GM10248 (cell line): ENCODE measurements at regions of chr2 and their contacts with region 1.

Region 1: GRCh38 chr2:86468162-86469033 is 27.2 kb downstream of the KDM3A start:
- DNase-seq: no peak
- CTCF ChIP-seq: no peak

Region 2: DNA sequence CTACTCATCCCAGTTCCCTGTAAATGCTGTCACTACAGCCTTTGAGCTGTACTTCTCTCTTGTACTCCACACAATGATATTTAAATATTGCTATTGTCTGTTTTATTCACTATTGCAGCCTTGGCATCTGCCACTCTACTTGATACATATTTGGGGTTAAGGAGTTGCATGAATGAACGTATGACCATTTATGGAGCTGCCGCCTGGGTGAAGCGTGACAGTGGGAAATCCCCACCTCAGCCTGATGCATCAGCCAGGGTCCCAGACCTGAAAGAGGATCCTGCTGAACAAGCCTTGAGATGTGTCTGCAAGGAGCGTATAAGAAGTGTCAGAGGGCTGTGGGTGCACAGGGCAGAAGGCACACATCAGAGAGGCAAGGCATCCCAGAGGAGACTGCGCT is 230.0 kb before region 1 on chr2:
- CTCF ChIA-PET with region 1: no interaction called
- POLR2A ChIA-PET with region 1: no interaction called
- DNase-seq: peak; percentile 75
- CTCF ChIP-seq: no peak

Region 3: GRCh38 chr2:86453836-86454235 is 14.6 kb before region 1 on chr2:
- CTCF ChIA-PET with region 1: interaction called, 15 read pairs
- POLR2A ChIA-PET with region 1: no interaction called
- DNase-seq: no peak
- CTCF ChIP-seq: no peak

Region 4: DNA sequence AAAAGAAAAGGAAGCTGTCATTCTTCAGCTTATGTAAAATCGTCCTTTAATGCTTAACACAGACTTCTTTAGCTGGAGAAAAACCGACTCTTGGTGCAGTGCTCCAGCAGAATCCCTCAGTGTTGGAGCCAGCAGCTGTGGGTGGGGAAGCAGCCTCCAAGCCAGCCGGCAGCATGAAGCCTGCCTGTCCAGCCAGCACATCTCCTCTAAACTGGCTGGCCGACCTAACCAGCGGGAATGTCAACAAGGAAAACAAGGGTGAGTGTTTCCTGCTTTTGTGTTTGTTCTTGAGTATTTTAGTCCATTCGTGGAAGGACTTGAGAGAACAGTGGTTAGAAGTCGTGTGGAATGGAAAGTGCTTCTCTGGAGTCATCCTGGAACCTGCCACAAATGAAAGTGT is 11.7 kb after region 1 on chr2:
- CTCF ChIA-PET with region 1: interaction called, 13 read pairs
- POLR2A ChIA-PET with region 1: no interaction called
- DNase-seq: no peak
- CTCF ChIP-seq: no peak